HepG2 (cell line): ENCODE measurements at regions of chr14 and their contacts with region 1.

Region 1: GRCh38 chr14:90235179-90235976 is 21.0 kb upstream of the PSMC1 start:
- DNase-seq: peak; percentile 13
- ATAC-seq: peak; percentile 94
- H3K4me3 ChIP-seq: no peak overlapping the region
- H3K27ac ChIP-seq: no peak overlapping the region
- H3K4me1 ChIP-seq: peaks cover 5% of the 10 kb centered on the region; the same call in 1 of the 2 replicates
- H3K27me3 ChIP-seq: peaks cover 0 to 6% of the 10 kb centered on the region in 2 experiments; a peak in 2 of 5 replicates
- CTCF ChIP-seq: peak; percentile 90
- EP300 ChIP-seq: no peak
- POLR2A ChIP-seq: no peak
- RAD21 ChIP-seq: peak; percentile 83

Region 2: GRCh38 chr14:89954070-89955028 is 281.0 kb before region 1 on chr14 and contains the start of gene EFCAB11:
- CTCF ChIA-PET with region 1: no interaction called
- POLR2A ChIA-PET with region 1: no interaction called
- in situ Hi-C with region 1: loop called (anchors 25 kb)
- intact Hi-C with region 1: no loop called
- DNase-seq: peak; percentile 98
- ATAC-seq: peak; percentile 89
- H3K4me3 ChIP-seq: peak within 1 kb of the TSS; percentile 72 to 95 (median 81)
- H3K27ac ChIP-seq: peak within 1 kb of the TSS; percentile 85
- H3K4me1 ChIP-seq: peaks cover 26% of the 10 kb centered on the region
- H3K27me3 ChIP-seq: no peaks in the 10 kb centered on the region; a peak in 1 of 5 replicates
- CTCF ChIP-seq: no peak
- EP300 ChIP-seq: no peak
- POLR2A ChIP-seq: peak; percentile 87 to 93
- RAD21 ChIP-seq: no peak
- total RNA-seq, gene EFCAB11: 31.5 and 46.5 TPM in 2 replicates

Region 3: DNA sequence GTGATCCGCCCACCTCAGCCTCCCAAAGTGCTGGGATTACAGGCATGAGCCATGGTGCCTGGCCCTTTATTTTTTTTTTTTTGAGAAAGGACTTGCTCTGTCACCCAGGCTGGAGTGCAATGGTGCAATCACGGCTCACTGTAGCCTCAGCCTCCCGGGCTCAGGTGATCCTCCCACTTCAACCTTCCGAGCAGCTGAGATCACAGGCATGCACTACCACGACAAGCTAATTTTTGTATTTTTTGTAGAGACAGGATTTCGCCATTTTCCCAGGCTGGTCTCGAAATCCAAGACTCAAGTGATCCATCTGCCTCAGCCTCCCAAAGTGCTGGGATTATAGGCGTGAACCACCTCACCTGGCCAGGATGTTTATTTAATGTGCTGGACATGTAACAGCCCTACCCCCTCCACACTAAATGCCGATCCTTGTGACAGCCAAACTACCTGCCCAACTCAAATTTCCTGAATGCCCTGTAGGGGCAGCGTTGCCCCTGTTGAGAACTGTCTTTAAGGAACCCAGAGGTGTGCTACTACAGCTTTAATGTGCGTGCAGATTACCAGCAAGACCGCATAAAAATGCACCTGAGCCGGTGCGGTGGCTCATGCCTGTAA is 125.6 kb before region 1 on chr14:
- CTCF ChIA-PET with region 1: no interaction called
- POLR2A ChIA-PET with region 1: no interaction called
- in situ Hi-C with region 1: no loop called
- intact Hi-C with region 1: loop called (anchors 5 kb)
- DNase-seq: peak; percentile 13
- ATAC-seq: peak; percentile 57; the same call in 2 of the 3 replicates
- H3K4me3 ChIP-seq: no peak overlapping the region
- H3K27ac ChIP-seq: no peak overlapping the region
- H3K4me1 ChIP-seq: no peaks in the 10 kb centered on the region
- H3K27me3 ChIP-seq: peaks cover 0 to 11% of the 10 kb centered on the region in 2 experiments; a peak in 1 of 5 replicates
- CTCF ChIP-seq: 0 out of 2 replicates have a peak, but pooled peaks have one; percentile 8
- EP300 ChIP-seq: no peak
- POLR2A ChIP-seq: no peak
- RAD21 ChIP-seq: no peak

Region 4: DNA sequence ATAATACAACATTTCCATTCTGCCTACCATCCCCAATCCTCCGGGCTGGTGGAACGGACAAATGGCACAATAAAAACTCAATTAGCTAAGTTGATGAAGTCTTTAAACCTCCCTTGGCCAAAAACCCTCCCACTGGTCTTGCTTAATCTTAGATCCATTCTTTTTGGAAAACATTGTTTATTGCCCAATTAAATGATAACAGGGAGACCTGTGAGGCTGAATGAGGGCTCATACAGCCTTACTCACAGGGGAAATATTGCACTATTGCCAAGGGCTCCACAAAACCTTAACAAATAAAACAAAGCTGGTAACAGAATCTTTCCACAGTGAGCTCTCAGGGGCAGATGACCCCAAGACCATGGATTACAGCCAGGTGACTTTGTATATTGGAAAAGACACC is 13.2 kb after region 1 on chr14:
- CTCF ChIA-PET with region 1: no interaction called
- POLR2A ChIA-PET with region 1: no interaction called
- in situ Hi-C with region 1: no loop called
- intact Hi-C with region 1: no loop called
- DNase-seq: no peak
- ATAC-seq: no peak
- H3K4me3 ChIP-seq: no peak overlapping the region
- H3K27ac ChIP-seq: no peak overlapping the region
- H3K4me1 ChIP-seq: no peaks in the 10 kb centered on the region
- H3K27me3 ChIP-seq: peaks cover 0 to 4% of the 10 kb centered on the region in 2 experiments; a peak in 1 of 5 replicates
- CTCF ChIP-seq: no peak
- EP300 ChIP-seq: no peak
- POLR2A ChIP-seq: no peak
- RAD21 ChIP-seq: no peak

Region 5: GRCh38 chr14:90288651-90289355 is 53.4 kb after region 1 on chr14:
- CTCF ChIA-PET with region 1: no interaction called
- POLR2A ChIA-PET with region 1: no interaction called
- in situ Hi-C with region 1: no loop called
- intact Hi-C with region 1: no loop called
- DNase-seq: peak; percentile 3
- ATAC-seq: peak; percentile 86
- H3K4me3 ChIP-seq: no peak overlapping the region
- H3K27ac ChIP-seq: no peak overlapping the region
- H3K4me1 ChIP-seq: no peaks in the 10 kb centered on the region; the same call in 1 of the 2 replicates
- H3K27me3 ChIP-seq: no peaks in the 10 kb centered on the region
- CTCF ChIP-seq: no peak
- EP300 ChIP-seq: no peak
- POLR2A ChIP-seq: no peak
- RAD21 ChIP-seq: no peak